ENCODE measurements at regions of chr4 and their contacts with region 1.

Region 1: GRCh38 chr4:40736910-40737309 is 12.8 kb upstream of the NSUN7 start:
- DNase-seq: no peak
- H3K4me3 ChIP-seq: no peak overlapping the region
- H3K27ac ChIP-seq: no peak overlapping the region
- H3K27me3 ChIP-seq: no peaks in the 10 kb centered on the region
- CTCF ChIP-seq: peak in 55 of 56 donors; percentile 30 to 84 (median 62)

Region 2: GRCh38 chr4:40840985-40841571 is 104.2 kb after region 1 on chr4:
- intact Hi-C with region 1: loop called (anchors 1 to 5 kb)
- DNase-seq: peak; percentile 16 to 92 (median 79)
- H3K4me3 ChIP-seq: no peak overlapping the region
- H3K27ac ChIP-seq: peak overlapping the region in 11 of 59 donors; percentile 5 to 72 (median 47)
- H3K27me3 ChIP-seq: no peaks in the 10 kb centered on the region
- CTCF ChIP-seq: peak; percentile 35 to 89 (median 76)

Region 3: DNA sequence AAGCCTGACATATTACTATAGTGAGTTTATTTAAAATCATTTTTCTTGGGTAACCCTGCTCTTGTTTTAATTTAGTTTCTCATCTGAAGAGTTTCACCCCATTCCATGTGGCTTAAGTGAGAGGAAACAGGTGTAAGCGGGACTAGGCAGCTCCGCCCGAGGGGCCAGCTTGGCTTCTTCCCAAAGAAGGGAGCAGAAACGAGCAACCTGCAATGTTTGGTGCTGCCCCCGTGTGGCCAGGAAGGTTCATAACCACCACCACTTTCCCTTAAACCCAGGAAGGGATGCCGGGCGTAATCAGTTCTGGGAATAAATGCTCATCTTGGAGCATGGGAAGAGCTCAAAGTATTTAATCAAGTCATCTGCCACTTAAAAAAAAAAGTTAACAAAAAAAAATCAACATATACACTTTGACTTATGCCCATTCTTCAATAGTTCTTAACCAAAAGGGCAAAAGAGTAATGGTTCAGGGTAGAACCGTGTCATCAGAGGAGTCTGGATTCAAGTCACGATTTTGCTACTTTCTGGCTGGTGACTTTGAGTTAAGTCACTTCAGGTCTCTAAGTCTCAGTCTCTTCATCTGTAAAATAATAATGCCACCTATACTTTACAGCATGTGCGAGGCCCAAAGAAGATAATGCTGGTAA is 160.8 kb after region 1 on chr4:
- intact Hi-C with region 1: loop called in 1 of 2 experiments (anchors 5 kb)
- DNase-seq: peak; percentile 46 to 83 (median 73)
- H3K4me3 ChIP-seq: peak overlapping the region in 21 of 59 donors; percentile 4 to 43 (median 32)
- H3K27ac ChIP-seq: peak overlapping the region in 4 of 59 donors; percentile 7 to 66 (median 10)
- H3K27me3 ChIP-seq: no peaks in the 10 kb centered on the region
- CTCF ChIP-seq: peak; percentile 60 to 93 (median 86)

Region 4: GRCh38 chr4:40908702-40909362 is 171.9 kb after region 1 on chr4:
- intact Hi-C with region 1: loop called in 1 of 2 experiments (anchors 5 kb)
- DNase-seq: peak in 9 of 10 donors; percentile 28 to 71 (median 63)
- H3K4me3 ChIP-seq: no peak overlapping the region
- H3K27ac ChIP-seq: peak overlapping the region in 4 of 59 donors; percentile 8 to 55 (median 33)
- H3K27me3 ChIP-seq: no peaks in the 10 kb centered on the region
- CTCF ChIP-seq: peak; percentile 61 to 94 (median 85)

Region 5: DNA sequence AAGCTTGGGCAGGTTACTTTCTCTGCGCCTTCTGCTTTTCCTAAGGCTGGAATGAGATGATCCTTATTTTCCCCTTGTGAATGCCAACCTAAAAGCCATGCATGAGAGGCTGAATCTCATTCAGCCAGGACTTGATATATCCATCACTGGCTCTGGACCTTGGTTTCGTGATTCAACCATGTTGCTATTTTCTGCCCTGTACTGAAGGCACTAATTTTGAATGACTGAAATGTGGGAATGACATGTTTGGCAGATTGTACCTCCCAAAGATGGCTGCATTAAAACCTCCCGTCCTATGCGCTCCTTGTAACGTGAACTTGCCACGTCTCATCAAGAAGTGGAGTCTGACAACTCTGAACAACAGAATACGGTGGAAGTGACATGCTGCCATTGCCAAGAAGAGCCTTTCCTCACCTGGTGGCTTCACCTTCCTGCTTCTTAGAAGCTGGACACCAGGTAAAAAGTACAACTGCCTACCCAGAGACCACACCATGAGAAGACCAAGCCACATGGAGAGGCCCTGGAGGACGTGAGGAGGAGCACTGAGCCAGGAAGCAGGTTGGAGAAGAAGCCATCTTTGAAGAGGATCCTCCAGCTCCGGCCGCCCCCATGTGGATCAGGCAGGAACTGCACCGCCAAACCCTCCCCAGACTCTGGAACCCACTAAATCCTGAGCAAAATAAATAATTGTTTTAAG is 187.3 kb after region 1 on chr4:
- intact Hi-C with region 1: loop called in 1 of 2 experiments (anchors 5 kb)
- DNase-seq: peak in 9 of 10 donors; percentile 30 to 75 (median 62)
- H3K4me3 ChIP-seq: no peak overlapping the region
- H3K27ac ChIP-seq: peak overlapping the region in 13 of 59 donors; percentile 2 to 58 (median 35)
- H3K27me3 ChIP-seq: no peaks in the 10 kb centered on the region
- CTCF ChIP-seq: peak; percentile 61 to 92 (median 83)